IMR-90 (cell line): ENCODE measurements at regions of chr1 and their contacts with region 1.

Region 1: DNA sequence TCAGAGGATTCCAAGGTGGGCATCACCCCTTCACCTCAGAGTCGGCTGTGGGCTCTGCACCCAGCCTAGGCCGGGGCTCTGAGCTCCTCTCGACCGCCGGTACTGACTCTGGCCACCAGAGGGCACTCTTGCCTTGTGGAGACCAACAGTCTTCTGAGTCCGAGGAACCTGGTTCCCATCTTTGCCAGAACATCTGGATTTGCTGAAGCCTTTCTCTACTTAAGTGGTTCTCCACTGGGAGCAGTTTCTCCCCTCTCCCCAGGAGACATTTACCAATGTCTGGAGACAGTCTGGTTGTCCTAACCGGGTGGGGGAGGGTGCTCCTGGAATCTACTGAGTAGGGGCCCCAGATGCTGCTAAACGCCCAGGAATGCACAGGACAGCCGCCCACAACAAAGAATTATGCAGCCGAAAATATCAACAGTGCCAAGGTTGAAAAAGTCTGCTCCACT is 9.4 kb downstream of the ETV3L start:
- DNase-seq: peak; percentile 87
- ATAC-seq: peak; percentile 93
- H3K4me3 ChIP-seq: no peak overlapping the region
- H3K27ac ChIP-seq: no peak overlapping the region
- H3K4me1 ChIP-seq: no peaks in the 10 kb centered on the region; the same call in 1 of the 2 replicates
- H3K27me3 ChIP-seq: no peaks in the 10 kb centered on the region
- CTCF ChIP-seq: peak; percentile 95
- POLR2A ChIP-seq: 0 out of 2 replicates have a peak, but pooled peaks have one; percentile 46
- RAD21 ChIP-seq: peak; percentile 97

Region 2: DNA sequence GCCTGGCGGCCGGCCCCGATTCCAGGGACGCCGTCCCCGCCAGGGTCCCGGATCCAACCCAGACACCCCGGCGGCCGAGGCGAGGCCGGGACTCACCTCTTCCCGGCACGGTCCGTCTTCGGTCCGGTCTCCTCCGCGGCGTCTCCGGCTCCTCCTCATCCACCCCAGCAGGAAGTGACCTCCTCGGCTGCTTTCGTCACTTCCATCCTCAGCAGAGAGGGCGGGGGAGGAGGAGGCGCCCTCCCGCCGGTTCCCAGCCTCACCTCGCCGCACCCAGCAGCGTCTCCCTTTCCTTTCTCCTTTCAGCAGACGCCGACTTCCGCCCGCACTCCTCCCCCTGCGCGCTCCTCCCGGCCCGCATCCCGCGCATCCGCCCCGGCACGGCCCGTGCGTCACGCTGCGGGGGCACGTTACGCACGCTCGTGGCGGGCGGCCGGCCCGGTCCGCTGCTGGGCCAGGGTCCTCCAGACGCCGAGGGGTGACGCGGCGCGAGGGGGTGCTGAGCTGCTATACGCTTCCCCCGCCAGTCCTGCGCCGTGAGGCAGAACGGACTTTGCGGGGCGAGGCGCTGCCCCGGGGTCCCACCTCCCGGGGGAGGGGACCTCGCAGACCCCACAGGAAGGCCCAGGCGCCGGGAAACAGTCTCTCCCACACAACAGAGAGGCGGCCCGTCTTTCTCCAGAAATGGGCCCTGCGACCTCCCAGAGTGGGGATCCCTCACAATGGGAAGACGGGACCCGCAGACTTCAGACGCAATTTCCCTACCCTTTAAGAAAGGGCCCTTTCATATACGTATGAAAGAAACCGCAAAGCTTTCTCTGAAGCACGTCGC is 48.2 kb after region 1 on chr1 and contains the start of gene ETV3:
- CTCF ChIA-PET with region 1: interaction called, 5 read pairs
- POLR2A ChIA-PET with region 1: no interaction called
- dilution Hi-C with region 1: no loop called
- in situ Hi-C with region 1: no loop called
- intact Hi-C with region 1: loop called (anchors 5 kb)
- DNase-seq: peak; percentile 92
- ATAC-seq: peak; percentile 93
- H3K4me3 ChIP-seq: peak within 1 kb of the TSS; percentile 91
- H3K27ac ChIP-seq: peak within 1 kb of the TSS; percentile 77
- H3K4me1 ChIP-seq: peaks cover 4% of the 10 kb centered on the region
- H3K27me3 ChIP-seq: no peaks in the 10 kb centered on the region
- CTCF ChIP-seq: no peak
- POLR2A ChIP-seq: peak; percentile 98
- RAD21 ChIP-seq: no peak
- total RNA-seq, gene ETV3: 14.7 and 21.1 TPM in 2 replicates

Region 3: GRCh38 chr1:157145076-157145475 is 54.9 kb after region 1 on chr1:
- CTCF ChIA-PET with region 1: interaction called, 11 read pairs
- POLR2A ChIA-PET with region 1: no interaction called
- dilution Hi-C with region 1: no loop called
- in situ Hi-C with region 1: loop called (anchors 5 kb)
- intact Hi-C with region 1: no loop called
- DNase-seq: peak; percentile 41
- ATAC-seq: no peak
- H3K4me3 ChIP-seq: no peak overlapping the region
- H3K27ac ChIP-seq: no peak overlapping the region
- H3K4me1 ChIP-seq: peaks cover 4% of the 10 kb centered on the region; the same call in 1 of the 2 replicates
- H3K27me3 ChIP-seq: no peaks in the 10 kb centered on the region
- CTCF ChIP-seq: no peak
- POLR2A ChIP-seq: no peak
- RAD21 ChIP-seq: no peak

Region 4: GRCh38 chr1:157156058-157156541 is 65.9 kb after region 1 on chr1:
- CTCF ChIA-PET with region 1: interaction called, 88 read pairs
- POLR2A ChIA-PET with region 1: interaction called, 3 read pairs
- dilution Hi-C with region 1: no loop called
- in situ Hi-C with region 1: loop called (anchors 5 kb)
- intact Hi-C with region 1: loop called (anchors 1 kb)
- DNase-seq: peak; percentile 54
- ATAC-seq: peak; percentile 89
- H3K4me3 ChIP-seq: no peak overlapping the region
- H3K27ac ChIP-seq: no peak overlapping the region
- H3K4me1 ChIP-seq: peaks cover 10% of the 10 kb centered on the region
- H3K27me3 ChIP-seq: peaks cover 3% of the 10 kb centered on the region; the same call in 1 of the 2 replicates
- CTCF ChIP-seq: peak; percentile 92
- POLR2A ChIP-seq: no peak
- RAD21 ChIP-seq: peak; percentile 86

Region 5: GRCh38 chr1:157262422-157262821 is 172.2 kb after region 1 on chr1:
- CTCF ChIA-PET with region 1: no interaction called
- POLR2A ChIA-PET with region 1: no interaction called
- dilution Hi-C with region 1: no loop called
- in situ Hi-C with region 1: no loop called
- intact Hi-C with region 1: no loop called
- DNase-seq: no peak
- ATAC-seq: no peak
- H3K4me3 ChIP-seq: no peak overlapping the region
- H3K27ac ChIP-seq: no peak overlapping the region
- H3K4me1 ChIP-seq: no peaks in the 10 kb centered on the region
- H3K27me3 ChIP-seq: no peaks in the 10 kb centered on the region
- CTCF ChIP-seq: no peak
- POLR2A ChIP-seq: no peak
- RAD21 ChIP-seq: no peak

Region 6: DNA sequence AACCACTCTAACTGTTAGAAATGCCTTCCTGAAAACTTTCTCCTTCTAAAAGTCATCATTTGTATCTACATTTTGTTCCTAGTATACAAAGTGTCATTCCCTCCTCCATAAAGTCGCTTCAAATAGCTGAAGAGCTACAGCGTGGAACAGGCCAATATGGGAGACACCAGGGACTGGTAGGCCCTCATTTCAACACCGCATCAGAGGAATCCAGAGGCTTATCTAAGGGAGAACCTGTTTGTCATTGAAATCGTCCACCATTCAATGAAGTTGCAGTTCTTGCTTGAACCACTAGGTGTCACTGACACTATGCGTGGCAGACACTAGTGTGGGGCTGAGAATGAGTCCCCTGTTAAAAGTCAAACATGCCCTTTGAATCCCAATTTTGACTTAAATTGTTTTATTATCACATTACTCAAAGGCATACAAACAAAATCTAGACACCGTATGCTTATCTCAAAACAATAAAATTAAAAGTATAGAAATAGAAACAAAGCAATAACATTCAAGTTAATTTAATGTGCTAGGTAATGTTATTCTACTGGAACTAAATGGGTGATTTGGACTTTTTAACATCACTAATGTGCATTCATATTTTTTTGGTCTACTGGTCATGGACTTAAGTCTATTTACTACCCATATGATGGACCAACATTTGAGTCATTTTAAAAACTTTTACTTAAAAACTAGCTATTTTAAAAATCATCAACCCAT is 279.7 kb after region 1 on chr1:
- CTCF ChIA-PET with region 1: no interaction called
- POLR2A ChIA-PET with region 1: no interaction called
- dilution Hi-C with region 1: no loop called
- in situ Hi-C with region 1: no loop called
- intact Hi-C with region 1: loop called (anchors 10 kb)
- DNase-seq: peak; percentile 43
- ATAC-seq: peak; percentile 98
- H3K4me3 ChIP-seq: no peak overlapping the region
- H3K27ac ChIP-seq: no peak overlapping the region
- H3K4me1 ChIP-seq: no peaks in the 10 kb centered on the region
- H3K27me3 ChIP-seq: peaks cover 1% of the 10 kb centered on the region; the same call in 1 of the 2 replicates
- CTCF ChIP-seq: peak; percentile 67
- POLR2A ChIP-seq: no peak
- RAD21 ChIP-seq: peak; percentile 66

Region 7: DNA sequence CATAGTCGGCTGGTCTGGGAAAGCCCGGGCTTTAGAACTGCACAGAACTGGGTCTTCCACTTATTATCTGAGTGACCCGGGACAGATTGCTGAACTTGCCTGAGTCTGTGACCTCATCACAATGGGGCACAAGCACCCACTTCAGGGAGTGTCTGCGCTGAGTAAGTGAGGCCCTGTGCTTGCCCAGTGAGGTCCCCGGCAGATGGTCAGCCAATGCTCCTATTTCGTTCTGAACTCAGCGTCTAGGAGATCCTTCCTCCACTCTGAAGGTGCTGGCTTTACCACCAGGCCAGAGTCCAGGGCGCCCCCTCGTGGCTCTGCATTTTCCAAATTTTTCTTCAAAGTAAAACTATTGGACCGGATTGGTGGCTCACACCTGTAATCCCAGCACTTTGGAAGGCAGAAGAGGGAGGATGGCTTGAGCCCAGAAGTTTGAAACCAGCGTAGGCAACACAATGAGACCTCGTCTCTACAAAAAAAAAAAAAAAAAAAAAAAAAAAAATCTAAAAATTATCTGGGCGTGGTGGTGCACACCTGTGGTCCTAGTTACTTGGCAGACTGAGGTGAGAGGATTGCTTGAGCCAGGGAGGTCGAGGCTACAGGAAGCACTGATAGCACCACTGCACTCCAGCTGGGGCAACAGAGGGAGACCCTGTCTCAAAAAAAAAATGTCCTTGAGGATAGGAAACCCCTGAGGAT is 400.4 kb after region 1 on chr1:
- CTCF ChIA-PET with region 1: no interaction called
- POLR2A ChIA-PET with region 1: no interaction called
- dilution Hi-C with region 1: no loop called
- in situ Hi-C with region 1: no loop called
- intact Hi-C with region 1: loop called (anchors 2 kb)
- DNase-seq: peak; percentile 26
- ATAC-seq: peak; percentile 66
- H3K4me3 ChIP-seq: no peak overlapping the region
- H3K27ac ChIP-seq: no peak overlapping the region
- H3K4me1 ChIP-seq: no peaks in the 10 kb centered on the region
- H3K27me3 ChIP-seq: no peaks in the 10 kb centered on the region
- CTCF ChIP-seq: peak; percentile 62
- POLR2A ChIP-seq: no peak
- RAD21 ChIP-seq: peak; percentile 41